ENCODE measurements at regions of chr12 and their contacts with region 1.

Region 1: DNA sequence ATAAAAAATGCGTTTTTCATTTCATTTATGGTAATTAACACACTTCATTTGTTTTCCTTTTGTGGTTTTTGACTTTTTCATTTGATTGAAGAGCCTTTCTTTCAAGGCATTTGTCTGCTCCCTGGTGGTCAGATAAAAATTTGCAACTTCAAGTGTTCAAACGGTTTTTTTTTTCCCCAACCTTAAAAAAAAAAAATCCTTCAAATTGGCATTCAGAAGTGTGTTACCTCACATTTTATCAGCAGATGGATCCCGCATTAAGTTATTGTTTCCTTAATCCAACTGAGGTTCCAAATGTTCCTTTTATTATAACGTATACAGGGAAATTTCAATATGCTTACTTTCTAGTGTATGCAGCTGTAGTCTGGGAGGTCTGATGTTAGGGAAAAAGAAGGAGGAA is 47.2 kb downstream of the MYF5 start:
- DNase-seq: peak; percentile 66
- ATAC-seq: peak; percentile 53; the same call in 1 of the 2 replicates
- H3K4me3 ChIP-seq: no peak overlapping the region
- H3K27ac ChIP-seq: no peak overlapping the region
- H3K4me1 ChIP-seq: peaks cover 2% of the 10 kb centered on the region; the same call in 1 of the 2 replicates
- H3K27me3 ChIP-seq: no peaks in the 10 kb centered on the region
- CTCF ChIP-seq: peak; percentile 75
- POLR2A ChIP-seq: no peak
- RAD21 ChIP-seq: peak; percentile 70

Region 2: DNA sequence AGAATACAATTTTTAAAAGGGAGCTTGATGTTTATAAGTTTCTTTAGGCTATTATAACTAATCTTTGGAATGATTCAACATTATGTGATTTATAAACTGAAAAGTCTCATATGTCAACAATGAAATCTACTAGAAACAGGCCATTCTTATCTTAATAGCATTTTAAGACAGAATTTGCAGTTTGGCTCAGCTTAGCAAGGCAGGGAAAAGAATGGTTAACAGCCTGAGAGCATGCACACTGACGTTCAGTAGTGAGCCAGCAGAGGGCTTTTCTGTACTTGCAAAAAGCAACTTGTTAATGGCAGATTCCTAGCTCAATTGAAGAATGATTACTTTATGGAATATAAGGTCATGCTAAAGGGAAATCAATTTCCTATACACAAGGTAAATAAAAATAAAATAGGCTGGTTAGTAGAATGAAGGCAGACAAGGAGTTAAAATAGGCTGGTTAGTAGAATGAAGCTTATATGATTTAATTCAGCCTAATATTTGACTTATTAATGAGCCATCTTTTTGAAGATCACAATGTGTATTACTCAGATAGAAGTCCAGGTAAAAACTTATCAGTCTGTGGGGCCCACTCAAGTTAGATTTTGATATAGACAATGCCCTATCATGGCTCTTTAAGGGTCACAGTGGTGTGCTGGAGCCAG is 568.7 kb before region 1 on chr12:
- CTCF ChIA-PET with region 1: interaction called, 3 read pairs
- POLR2A ChIA-PET with region 1: no interaction called
- dilution Hi-C with region 1: no loop called
- in situ Hi-C with region 1: loop called (anchors 25 kb)
- intact Hi-C with region 1: loop called (anchors 2 kb)
- DNase-seq: peak; percentile 86
- ATAC-seq: peak; percentile 91
- H3K4me3 ChIP-seq: no peak overlapping the region
- H3K27ac ChIP-seq: no peak overlapping the region
- H3K4me1 ChIP-seq: peaks cover 3% of the 10 kb centered on the region; the same call in 1 of the 2 replicates
- H3K27me3 ChIP-seq: no peaks in the 10 kb centered on the region
- CTCF ChIP-seq: peak; percentile 82
- POLR2A ChIP-seq: no peak
- RAD21 ChIP-seq: peak; percentile 75

Region 3: GRCh38 chr12:80234667-80235066 is 529.2 kb before region 1 on chr12:
- CTCF ChIA-PET with region 1: interaction called, 10 read pairs
- POLR2A ChIA-PET with region 1: no interaction called
- dilution Hi-C with region 1: no loop called
- in situ Hi-C with region 1: no loop called
- intact Hi-C with region 1: no loop called
- DNase-seq: no peak
- ATAC-seq: peak; percentile 59
- H3K4me3 ChIP-seq: no peak overlapping the region
- H3K27ac ChIP-seq: no peak overlapping the region
- H3K4me1 ChIP-seq: no peaks in the 10 kb centered on the region
- H3K27me3 ChIP-seq: no peaks in the 10 kb centered on the region
- CTCF ChIP-seq: no peak
- POLR2A ChIP-seq: no peak
- RAD21 ChIP-seq: no peak

Region 4: GRCh38 chr12:80412369-80412953 is 351.4 kb before region 1 on chr12:
- CTCF ChIA-PET with region 1: interaction called, 3 read pairs
- POLR2A ChIA-PET with region 1: no interaction called
- dilution Hi-C with region 1: no loop called
- in situ Hi-C with region 1: loop called (anchors 10 kb)
- intact Hi-C with region 1: loop called (anchors 1 kb)
- DNase-seq: peak; percentile 69
- ATAC-seq: peak; percentile 81
- H3K4me3 ChIP-seq: no peak overlapping the region
- H3K27ac ChIP-seq: no peak overlapping the region
- H3K4me1 ChIP-seq: no peaks in the 10 kb centered on the region
- H3K27me3 ChIP-seq: no peaks in the 10 kb centered on the region
- CTCF ChIP-seq: peak; percentile 87
- POLR2A ChIP-seq: no peak
- RAD21 ChIP-seq: peak; percentile 94

Region 5: DNA sequence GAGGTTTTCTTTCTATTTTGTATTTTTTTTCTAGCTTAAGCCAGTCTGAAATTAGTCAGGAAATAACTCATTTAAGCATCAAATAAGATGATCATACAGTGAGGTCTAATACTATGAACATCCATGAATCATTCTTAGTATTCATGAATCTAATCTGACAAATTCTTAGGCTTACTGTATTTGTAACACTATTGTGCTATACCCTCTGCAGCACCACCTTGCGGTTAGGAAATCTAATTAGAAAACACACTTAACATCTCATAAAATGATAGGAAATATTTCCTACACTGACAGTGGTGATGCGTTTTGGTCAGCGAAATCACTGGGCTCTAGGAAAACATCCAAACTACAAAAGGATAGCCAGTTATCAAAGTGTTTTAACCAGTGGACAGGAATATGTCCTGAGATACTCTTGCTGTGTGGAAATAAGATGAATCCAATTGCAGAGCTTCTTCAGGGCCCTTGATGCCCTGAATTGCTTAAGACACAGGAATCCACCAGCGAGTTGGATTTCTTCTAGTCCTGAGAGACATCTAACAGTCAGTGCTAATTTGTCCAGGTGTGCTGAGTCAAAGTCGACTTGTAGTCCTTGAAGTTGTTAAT is 165.8 kb before region 1 on chr12:
- CTCF ChIA-PET with region 1: interaction called, 6 read pairs
- POLR2A ChIA-PET with region 1: no interaction called
- dilution Hi-C with region 1: no loop called
- in situ Hi-C with region 1: no loop called
- intact Hi-C with region 1: loop called (anchors 1 kb)
- DNase-seq: peak; percentile 83
- ATAC-seq: peak; percentile 67
- H3K4me3 ChIP-seq: no peak overlapping the region
- H3K27ac ChIP-seq: no peak overlapping the region
- H3K4me1 ChIP-seq: peaks cover 11% of the 10 kb centered on the region; the same call in 1 of the 2 replicates
- H3K27me3 ChIP-seq: no peaks in the 10 kb centered on the region
- CTCF ChIP-seq: peak; percentile 63
- POLR2A ChIP-seq: no peak
- RAD21 ChIP-seq: peak; percentile 62

Region 6: GRCh38 chr12:80778005-80778541 is 14.2 kb after region 1 on chr12:
- CTCF ChIA-PET with region 1: no interaction called
- POLR2A ChIA-PET with region 1: no interaction called
- dilution Hi-C with region 1: no loop called
- in situ Hi-C with region 1: no loop called
- intact Hi-C with region 1: no loop called
- DNase-seq: peak; percentile 94
- ATAC-seq: peak; percentile 92
- H3K4me3 ChIP-seq: no peak overlapping the region
- H3K27ac ChIP-seq: peak overlapping the region; percentile 98
- H3K4me1 ChIP-seq: peaks cover 2% of the 10 kb centered on the region
- H3K27me3 ChIP-seq: no peaks in the 10 kb centered on the region
- CTCF ChIP-seq: no peak
- POLR2A ChIP-seq: no peak
- RAD21 ChIP-seq: no peak

Region 7: GRCh38 chr12:81257947-81258551 is 494.2 kb after region 1 on chr12:
- CTCF ChIA-PET with region 1: no interaction called
- POLR2A ChIA-PET with region 1: no interaction called
- dilution Hi-C with region 1: no loop called
- in situ Hi-C with region 1: no loop called
- intact Hi-C with region 1: loop called (anchors 10 kb)
- DNase-seq: peak; percentile 47
- ATAC-seq: peak; percentile 59; the same call in 1 of the 2 replicates
- H3K4me3 ChIP-seq: no peak overlapping the region
- H3K27ac ChIP-seq: no peak overlapping the region
- H3K4me1 ChIP-seq: no peaks in the 10 kb centered on the region
- H3K27me3 ChIP-seq: no peaks in the 10 kb centered on the region
- CTCF ChIP-seq: peak; percentile 55
- POLR2A ChIP-seq: no peak
- RAD21 ChIP-seq: peak; percentile 68

Measured in IMR-90 (cell line).